ENCODE measurements at regions of chr5 and their contacts with region 1.

Region 1: GRCh38 chr5:43313035-43313853 is at the start of gene HMGCS1:
- DNase-seq: peak; percentile 100
- H3K4me3 Mint-ChIP-seq: peak within 1 kb of the TSS; percentile 99
- H3K27ac Mint-ChIP-seq: peak within 1 kb of the TSS; percentile 98
- H3K4me1 Mint-ChIP-seq: peaks cover 75% of the 10 kb centered on the region
- H3K27me3 Mint-ChIP-seq: no peaks in the 10 kb centered on the region
- total RNA-seq, gene HMGCS1: 105 TPM

Region 2: GRCh38 chr5:42950440-42951292 is 362.6 kb before region 1 on chr5:
- CTCF ChIA-PET with region 1: no interaction called
- intact Hi-C with region 1: loop called (anchors 1 kb)
- DNase-seq: peak; percentile 83
- H3K4me3 Mint-ChIP-seq: peak overlapping the region; percentile 87
- H3K27ac Mint-ChIP-seq: peak overlapping the region; percentile 88
- H3K4me1 Mint-ChIP-seq: peaks cover 9% of the 10 kb centered on the region
- H3K27me3 Mint-ChIP-seq: no peaks in the 10 kb centered on the region

Region 3: DNA sequence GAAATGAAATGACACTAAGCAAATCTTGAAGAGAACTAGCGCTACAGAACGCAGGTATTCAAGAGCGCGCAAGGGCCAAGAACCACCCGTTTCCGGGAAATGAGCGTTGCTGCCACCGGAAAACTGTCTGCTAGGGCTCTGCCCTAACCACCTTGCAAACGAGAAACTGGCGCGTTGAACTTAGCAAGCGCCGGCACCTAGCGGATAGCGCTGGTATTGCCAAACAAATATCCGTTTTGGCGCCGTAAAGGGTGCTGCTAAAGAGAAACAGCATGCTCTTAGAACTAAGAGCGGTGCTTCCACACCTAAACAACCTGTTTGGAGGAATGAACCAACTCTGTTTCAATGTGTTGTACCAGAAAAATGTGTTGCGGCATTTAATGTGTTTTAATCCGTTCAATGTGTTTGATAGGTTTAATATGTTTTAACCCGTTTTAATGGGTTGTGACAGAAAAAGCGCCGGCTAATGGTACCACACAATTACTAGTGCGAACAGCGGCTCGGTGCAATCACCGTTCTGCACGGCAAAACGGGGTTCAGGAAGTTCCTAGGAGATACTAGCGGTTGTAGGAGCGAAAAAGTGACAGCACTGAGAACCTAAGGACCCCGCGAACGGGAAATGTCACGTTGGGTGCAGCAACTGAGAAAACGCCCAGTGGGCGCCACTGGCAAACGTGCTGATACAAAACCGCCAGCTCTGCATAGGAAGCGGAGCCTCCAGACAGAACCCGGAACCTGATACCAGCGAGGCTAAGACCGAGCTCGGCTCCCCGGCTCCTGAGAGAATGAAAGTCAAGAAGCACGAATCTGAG is 272.8 kb before region 1 on chr5 and contains the start of gene ANXA2R:
- CTCF ChIA-PET with region 1: interaction called, 4 read pairs
- intact Hi-C with region 1: loop called (anchors 1 kb)
- DNase-seq: peak; percentile 98
- H3K4me3 Mint-ChIP-seq: peak within 1 kb of the TSS; percentile 96
- H3K27ac Mint-ChIP-seq: peak within 1 kb of the TSS; percentile 99
- H3K4me1 Mint-ChIP-seq: peaks cover 26% of the 10 kb centered on the region
- H3K27me3 Mint-ChIP-seq: no peaks in the 10 kb centered on the region
- total RNA-seq, gene ANXA2R: 6.0 to 6.5 TPM

Region 4: GRCh38 chr5:43120720-43121564 is 192.3 kb before region 1 on chr5 and contains the start of gene ZNF131:
- CTCF ChIA-PET with region 1: no interaction called
- intact Hi-C with region 1: loop called (anchors 1 kb)
- DNase-seq: peak; percentile 96
- H3K4me3 Mint-ChIP-seq: peak within 1 kb of the TSS; percentile 99
- H3K27ac Mint-ChIP-seq: peak within 1 kb of the TSS; percentile 96
- H3K4me1 Mint-ChIP-seq: peaks cover 38% of the 10 kb centered on the region
- H3K27me3 Mint-ChIP-seq: no peaks in the 10 kb centered on the region
- total RNA-seq, gene ZNF131: 25.0 to 29.6 TPM

Region 5: DNA sequence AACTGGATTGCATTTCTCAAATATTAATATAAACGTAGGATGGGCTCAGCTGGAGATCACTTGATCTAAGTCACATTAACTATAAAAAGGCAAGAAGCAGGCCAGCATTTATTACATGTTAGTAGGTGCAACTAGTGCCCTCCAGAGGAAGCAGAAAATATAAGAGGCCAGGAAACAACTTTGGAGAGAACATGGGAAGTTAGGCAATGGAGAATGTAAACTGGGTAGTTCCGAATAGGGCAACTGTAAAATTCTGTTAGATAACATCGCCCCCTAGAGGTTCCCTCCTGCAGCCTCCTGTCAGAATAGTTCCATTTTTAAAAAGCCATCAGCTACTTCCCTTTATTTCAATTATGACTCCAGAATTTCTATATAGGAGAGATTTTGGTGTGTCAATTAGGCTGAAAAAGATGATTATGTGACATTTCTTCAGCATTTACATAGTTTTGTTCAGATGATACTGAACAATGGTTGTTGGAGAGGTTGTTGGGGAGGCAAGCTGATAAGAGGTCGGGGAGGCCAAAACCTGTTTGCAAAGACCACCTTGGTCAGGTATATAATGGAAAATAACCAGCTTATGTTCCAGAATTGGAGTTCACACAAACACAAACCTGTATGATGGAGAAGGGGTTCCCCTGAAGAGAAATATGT is 76.6 kb after region 1 on chr5:
- CTCF ChIA-PET with region 1: interaction called, 18 read pairs
- intact Hi-C with region 1: loop called (anchors 1 kb)
- DNase-seq: peak; percentile 72
- H3K4me3 Mint-ChIP-seq: no peak overlapping the region
- H3K27ac Mint-ChIP-seq: no peak overlapping the region
- H3K4me1 Mint-ChIP-seq: peaks cover 32% of the 10 kb centered on the region
- H3K27me3 Mint-ChIP-seq: no peaks in the 10 kb centered on the region

Region 6: DNA sequence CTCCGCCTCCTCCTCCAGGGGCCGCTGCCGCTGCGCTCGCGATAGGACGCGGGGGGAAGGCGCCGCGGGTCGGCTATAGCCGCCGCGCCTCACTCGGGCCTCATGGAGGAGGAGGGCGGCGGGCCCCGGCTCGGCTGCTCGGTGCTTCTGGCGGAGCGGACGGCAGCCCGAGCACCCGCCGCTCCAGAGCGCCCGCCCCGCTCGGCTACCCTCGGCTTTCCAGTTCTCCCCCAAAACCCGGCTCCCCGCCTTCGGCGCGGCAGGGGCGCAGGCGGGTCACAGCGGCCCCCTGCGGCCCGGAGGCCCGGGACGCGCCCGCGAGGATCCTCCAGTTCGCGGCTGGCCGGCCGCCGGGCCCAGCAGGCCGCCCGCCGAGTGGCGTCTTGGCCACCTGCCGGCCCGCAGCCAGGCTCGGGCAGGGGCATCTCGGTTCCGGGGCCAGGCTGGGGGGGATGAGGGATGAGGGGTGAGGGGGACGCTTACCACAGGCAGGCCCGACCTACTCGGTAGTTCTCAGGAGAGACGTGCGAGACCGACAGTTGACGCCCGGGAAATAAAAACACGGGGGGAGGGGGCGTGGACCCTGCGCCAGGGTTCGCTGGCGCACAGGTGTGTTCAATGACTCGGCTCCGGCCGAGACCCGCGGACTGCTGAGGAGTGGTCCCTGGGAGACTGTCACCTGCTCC is 243.8 kb after region 1 on chr5 and contains the start of gene PAIP1:
- CTCF ChIA-PET with region 1: no interaction called
- intact Hi-C with region 1: loop called (anchors 1 kb)
- DNase-seq: peak; percentile 82
- H3K4me3 Mint-ChIP-seq: peak within 1 kb of the TSS; percentile 84
- H3K27ac Mint-ChIP-seq: peak within 1 kb of the TSS; percentile 95
- H3K4me1 Mint-ChIP-seq: peaks cover 17% of the 10 kb centered on the region
- H3K27me3 Mint-ChIP-seq: peaks cover 3% of the 10 kb centered on the region
- total RNA-seq, gene PAIP1: 41.7 to 42.9 TPM

Region 7: GRCh38 chr5:43702815-43703214 is 389.6 kb after region 1 on chr5:
- CTCF ChIA-PET with region 1: no interaction called
- intact Hi-C with region 1: no loop called
- DNase-seq: no peak
- H3K4me3 Mint-ChIP-seq: no peak overlapping the region
- H3K27ac Mint-ChIP-seq: no peak overlapping the region
- H3K4me1 Mint-ChIP-seq: no peaks in the 10 kb centered on the region
- H3K27me3 Mint-ChIP-seq: no peaks in the 10 kb centered on the region

Region 8: GRCh38 chr5:44875661-44876605 is 1562.7 kb after region 1 on chr5:
- CTCF ChIA-PET with region 1: no interaction called
- intact Hi-C with region 1: loop called (anchors 2 kb)
- DNase-seq: peak; percentile 52
- H3K4me3 Mint-ChIP-seq: no peak overlapping the region
- H3K27ac Mint-ChIP-seq: peak overlapping the region; percentile 84
- H3K4me1 Mint-ChIP-seq: peaks cover 25% of the 10 kb centered on the region
- H3K27me3 Mint-ChIP-seq: no peaks in the 10 kb centered on the region